ENCODE measurements at regions of chr6 and their contacts with region 1.

Region 1: GRCh38 chr6:81752138-81752920 is at the start of gene TENT5A:
- DNase-seq: peak; percentile 59 to 79
- ATAC-seq: peak; percentile 84 to 87
- H3K4me3 ChIP-seq: peak within 1 kb of the TSS; percentile 87
- H3K27ac ChIP-seq: peak within 1 kb of the TSS; percentile 84 to 90
- H3K4me1 ChIP-seq: 0 out of 3 replicates have a peak, but pooled peaks cover 2% of the 10 kb centered on the region
- CTCF ChIP-seq: no peak
- EP300 ChIP-seq: no peak
- POLR2A ChIP-seq: peak; percentile 29; the same call in 1 of the 2 replicates
- RAD21 ChIP-seq: 0 out of 5 replicates have a peak, but pooled peaks of 1 of the 2 experiments have one; percentile 7
- polyA plus RNA-seq, gene TENT5A: 1.8 and 2.3 TPM in 2 replicates

Region 2: GRCh38 chr6:81636930-81637568 is 115.3 kb before region 1 on chr6:
- CTCF ChIA-PET with region 1: no interaction called
- POLR2A ChIA-PET with region 1: no interaction called
- DNase-seq: no peak
- ATAC-seq: no peak
- H3K4me3 ChIP-seq: no peak overlapping the region
- H3K27ac ChIP-seq: no peak overlapping the region
- H3K4me1 ChIP-seq: no peaks in the 10 kb centered on the region
- CTCF ChIP-seq: no peak
- EP300 ChIP-seq: no peak
- POLR2A ChIP-seq: no peak
- RAD21 ChIP-seq: no peak

Region 3: GRCh38 chr6:81696482-81696881 is 55.8 kb before region 1 on chr6:
- CTCF ChIA-PET with region 1: no interaction called
- POLR2A ChIA-PET with region 1: no interaction called
- DNase-seq: peak in 1 of 2 experiments; percentile 0
- ATAC-seq: no peak
- H3K4me3 ChIP-seq: no peak overlapping the region
- H3K27ac ChIP-seq: no peak overlapping the region
- H3K4me1 ChIP-seq: peaks cover 10% of the 10 kb centered on the region; the same call in 1 of the 3 replicates
- CTCF ChIP-seq: no peak
- EP300 ChIP-seq: no peak
- POLR2A ChIP-seq: no peak
- RAD21 ChIP-seq: no peak

Region 4: GRCh38 chr6:81734085-81734484 is 18.2 kb before region 1 on chr6:
- CTCF ChIA-PET with region 1: no interaction called
- POLR2A ChIA-PET with region 1: no interaction called
- DNase-seq: no peak
- ATAC-seq: no peak
- H3K4me3 ChIP-seq: no peak overlapping the region
- H3K27ac ChIP-seq: no peak overlapping the region
- H3K4me1 ChIP-seq: no peaks in the 10 kb centered on the region
- CTCF ChIP-seq: no peak
- EP300 ChIP-seq: no peak
- POLR2A ChIP-seq: no peak
- RAD21 ChIP-seq: peak in 1 of 2 experiments; percentile 16; a peak in 1 of 5 replicates

Region 5: DNA sequence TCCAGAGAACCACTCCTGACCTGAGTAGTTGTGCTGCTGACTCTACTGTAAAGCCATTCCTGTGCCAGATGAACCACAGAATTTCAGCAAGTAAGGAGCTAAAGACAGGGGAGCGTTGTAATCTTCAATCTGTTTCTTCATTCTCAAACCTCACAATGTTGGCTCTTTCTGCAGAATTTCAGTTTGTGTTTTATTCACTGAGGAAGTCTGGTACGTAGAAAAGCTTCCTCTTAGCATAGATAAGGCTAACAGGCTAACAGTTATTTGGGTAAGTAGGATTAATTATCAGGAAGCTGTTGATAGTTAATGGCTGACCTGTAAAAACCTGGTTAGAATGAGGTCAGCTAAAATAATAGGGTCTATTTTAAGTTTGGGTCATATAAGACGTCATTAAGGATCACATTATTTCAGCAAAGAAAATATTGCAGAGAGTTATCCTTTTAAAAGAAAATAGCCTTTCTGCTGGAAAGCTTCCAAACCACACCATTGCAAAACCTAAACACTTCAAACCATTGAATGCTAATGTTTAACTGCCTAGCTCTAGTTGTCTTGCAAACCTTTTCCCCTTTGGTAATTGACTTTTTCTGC is 14.2 kb after region 1 on chr6:
- CTCF ChIA-PET with region 1: interaction called, 5 read pairs
- POLR2A ChIA-PET with region 1: interaction called, 12 read pairs
- DNase-seq: peak in 1 of 2 experiments; percentile 63
- ATAC-seq: peak; percentile 49 to 65
- H3K4me3 ChIP-seq: peak overlapping the region; percentile 20; the same call in 1 of the 3 replicates
- H3K27ac ChIP-seq: peak overlapping the region; percentile 74 to 77
- H3K4me1 ChIP-seq: peaks cover 35% of the 10 kb centered on the region
- CTCF ChIP-seq: no peak
- EP300 ChIP-seq: peak in 1 of 2 experiments; percentile 52; a peak in 2 of 5 replicates
- POLR2A ChIP-seq: no peak
- RAD21 ChIP-seq: no peak; a peak in 1 of 5 replicates

Region 6: DNA sequence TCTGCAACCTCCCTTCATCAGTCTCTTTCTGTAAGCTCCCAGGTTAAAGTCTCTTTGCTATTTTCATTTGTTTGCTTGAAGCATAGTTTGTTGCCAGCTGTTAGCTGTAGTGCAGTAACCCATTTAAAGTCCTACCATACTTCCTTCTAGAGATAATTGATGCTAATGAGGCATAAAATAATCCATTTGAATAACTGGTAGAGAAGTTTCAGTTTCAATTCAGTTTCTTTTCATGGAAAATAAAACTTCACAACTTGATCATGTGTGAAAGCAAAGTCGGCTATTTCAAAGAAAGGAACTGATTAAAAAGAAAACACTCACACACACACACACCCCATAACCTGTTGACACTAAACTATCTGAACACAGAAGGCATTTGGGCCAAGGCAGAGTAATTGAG is 68.7 kb after region 1 on chr6:
- CTCF ChIA-PET with region 1: no interaction called
- POLR2A ChIA-PET with region 1: no interaction called
- DNase-seq: no peak
- ATAC-seq: no peak
- H3K4me3 ChIP-seq: no peak overlapping the region
- H3K27ac ChIP-seq: no peak overlapping the region
- H3K4me1 ChIP-seq: 0 out of 3 replicates have a peak, but pooled peaks cover 5% of the 10 kb centered on the region
- CTCF ChIP-seq: no peak
- EP300 ChIP-seq: no peak
- POLR2A ChIP-seq: no peak
- RAD21 ChIP-seq: no peak

Measured in A549 (cell line).